Endothelial cell of umbilical vein (primary cell): ENCODE measurements at regions of chr1 and their contacts with region 1.

Region 1: DNA sequence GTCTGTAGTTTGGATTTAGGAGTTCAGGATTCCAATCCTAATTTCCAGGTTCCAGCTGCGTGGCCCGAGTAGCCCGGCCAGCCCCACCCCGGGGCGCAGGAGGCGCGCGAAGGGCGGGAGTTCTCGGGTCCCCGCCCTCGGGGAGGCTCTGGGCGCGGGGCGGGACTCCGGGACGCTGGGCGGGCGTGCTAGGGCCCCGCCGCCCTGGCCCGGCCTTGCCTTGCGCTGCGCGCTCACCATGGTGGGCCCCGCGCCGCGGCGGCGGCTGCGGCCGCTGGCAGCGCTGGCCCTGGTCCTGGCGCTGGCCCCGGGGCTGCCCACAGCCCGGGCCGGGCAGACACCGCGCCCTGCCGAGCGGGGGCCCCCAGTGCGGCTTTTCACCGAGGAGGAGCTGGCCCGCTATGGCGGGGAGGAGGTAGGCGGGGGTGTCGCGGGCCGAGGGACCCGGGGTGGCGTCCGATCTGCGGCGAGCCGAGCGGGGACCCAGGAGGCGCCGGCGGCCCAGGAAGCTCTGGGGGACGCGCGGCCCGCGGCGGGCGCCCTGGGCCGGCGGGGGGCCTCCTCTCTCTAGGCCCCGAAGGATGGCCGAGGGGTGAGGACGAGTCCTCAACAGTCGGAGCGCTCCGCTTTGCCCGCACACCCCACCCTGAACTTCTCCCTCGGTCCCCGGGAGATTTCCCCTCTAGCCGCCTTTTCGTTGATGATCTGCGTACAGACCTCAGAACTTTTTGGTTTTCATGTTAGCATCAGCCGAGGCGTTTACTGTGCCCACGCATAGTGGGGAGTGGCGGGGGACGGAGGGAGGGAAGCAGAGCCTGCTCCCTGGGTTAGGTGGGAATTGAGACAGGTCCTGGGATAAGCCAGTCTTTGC is at the start of gene NENF:
- DNase-seq: peak; percentile 59
- H3K4me3 ChIP-seq: peak within 1 kb of the TSS; percentile 26 to 58 (median 53)
- H3K27ac ChIP-seq: no peak within 1 kb of the TSS
- H3K4me1 ChIP-seq: peaks cover 5% of the 10 kb centered on the region
- H3K27me3 ChIP-seq: peaks cover 12 to 14% of the 10 kb centered on the region in 2 experiments
- CTCF ChIP-seq: no peak
- POLR2A ChIP-seq: peak; percentile 78
- total RNA-seq, gene NENF: 20.5 and 23.0 TPM in 2 replicates

Region 2: GRCh38 chr1:212414328-212415106 is 18.4 kb before region 1 on chr1 and contains the start of gene PACC1:
- CTCF ChIA-PET with region 1: no interaction called
- POLR2A ChIA-PET with region 1: no interaction called
- dilution Hi-C with region 1: no loop called
- intact Hi-C with region 1: loop called (anchors 1 kb)
- DNase-seq: peak; percentile 92
- H3K4me3 ChIP-seq: peak within 1 kb of the TSS; percentile 44 to 80 (median 73)
- H3K27ac ChIP-seq: no peak within 1 kb of the TSS
- H3K4me1 ChIP-seq: peaks cover 6% of the 10 kb centered on the region
- H3K27me3 ChIP-seq: no peaks in the 10 kb centered on the region
- CTCF ChIP-seq: peak in 1 of 2 donors; percentile 25
- POLR2A ChIP-seq: peak; percentile 65
- total RNA-seq, gene PACC1: 18.4 and 21.0 TPM in 2 replicates